ENCODE measurements at regions of chr1 and their contacts with region 1.

Region 1: DNA sequence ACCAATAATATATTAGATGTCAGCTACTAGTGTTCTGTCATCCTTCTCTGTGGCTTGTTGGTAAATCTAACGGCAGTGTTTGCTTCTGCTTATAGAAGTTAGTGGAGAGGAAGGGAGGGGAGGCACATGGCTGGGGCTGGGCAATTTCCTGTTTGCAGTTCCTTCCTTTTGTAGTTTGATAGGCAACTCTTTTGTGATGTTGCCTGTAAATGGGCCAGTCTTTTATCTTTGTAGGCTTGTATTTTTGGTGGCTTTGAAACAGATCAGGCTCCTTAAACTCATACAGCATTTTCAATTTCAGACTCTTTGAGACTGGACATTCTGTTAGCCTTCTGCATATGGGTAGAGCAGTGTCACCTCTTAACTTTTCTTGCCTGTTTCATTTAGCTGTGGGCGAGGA is 48.1 kb downstream of the CDC14A start:
- DNase-seq: peak; percentile 67
- ATAC-seq: peak; percentile 51
- H3K4me3 Mint-ChIP-seq: peak overlapping the region; percentile 60
- H3K27ac Mint-ChIP-seq: peak overlapping the region; percentile 92
- H3K4me1 Mint-ChIP-seq: peaks cover 84% of the 10 kb centered on the region
- H3K27me3 Mint-ChIP-seq: no peaks in the 10 kb centered on the region

Region 2: GRCh38 chr1:100377590-100378361 is 22.6 kb before region 1 on chr1:
- CTCF ChIA-PET with region 1: interaction called, 5 read pairs
- POLR2A ChIA-PET with region 1: no interaction called
- intact Hi-C with region 1: loop called in 1 of 2 experiments (anchors 1 kb)
- DNase-seq: no peak
- ATAC-seq: peak; percentile 89
- H3K4me3 Mint-ChIP-seq: no peak overlapping the region
- H3K27ac Mint-ChIP-seq: peak overlapping the region; percentile 84
- H3K4me1 Mint-ChIP-seq: peaks cover 62% of the 10 kb centered on the region
- H3K27me3 Mint-ChIP-seq: peaks cover 3% of the 10 kb centered on the region

Region 3: GRCh38 chr1:100414693-100415497 is 14.5 kb after region 1 on chr1:
- CTCF ChIA-PET with region 1: interaction called, 12 read pairs
- POLR2A ChIA-PET with region 1: interaction called, 3 read pairs
- intact Hi-C with region 1: no loop called
- DNase-seq: no peak
- ATAC-seq: peak; percentile 77
- H3K4me3 Mint-ChIP-seq: peak overlapping the region; percentile 33
- H3K27ac Mint-ChIP-seq: peak overlapping the region; percentile 85
- H3K4me1 Mint-ChIP-seq: peaks cover 72% of the 10 kb centered on the region
- H3K27me3 Mint-ChIP-seq: no peaks in the 10 kb centered on the region

Region 4: DNA sequence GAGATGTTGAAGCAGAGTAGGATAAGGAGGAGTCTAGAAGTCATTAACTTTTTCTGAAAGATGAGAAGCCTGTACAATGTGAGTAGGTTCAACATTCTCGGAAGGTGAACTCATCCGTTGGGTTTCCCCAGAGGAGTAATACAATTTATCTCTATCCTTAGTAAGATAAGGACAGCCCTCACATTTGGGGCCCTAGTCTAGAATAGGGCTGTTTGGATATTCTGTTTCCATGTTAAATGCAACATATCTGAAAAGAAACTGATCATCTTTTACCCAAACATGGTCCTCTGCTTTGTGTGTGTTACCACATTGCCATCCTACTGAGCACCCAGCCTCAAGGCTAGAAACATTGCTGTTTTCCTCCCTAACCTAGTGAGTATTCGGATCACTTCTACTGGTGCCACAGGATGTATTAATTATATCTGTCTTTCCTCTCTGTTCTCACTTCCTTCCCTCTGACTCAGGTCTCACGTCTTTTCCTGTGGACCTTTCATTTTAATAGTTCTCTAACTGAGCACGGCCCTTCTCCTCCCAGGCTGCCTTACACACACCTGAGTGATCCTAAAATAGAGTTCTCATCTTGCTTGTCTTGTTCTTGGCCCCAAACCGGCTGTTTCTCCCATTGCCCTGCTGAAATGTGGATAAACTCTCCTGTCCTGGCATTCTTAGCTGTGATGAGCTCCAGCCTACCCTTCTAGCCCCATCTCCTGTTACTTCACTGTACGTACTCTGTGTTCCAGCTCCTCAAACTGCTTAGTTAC is 43.6 kb after region 1 on chr1:
- CTCF ChIA-PET with region 1: interaction called, 3 read pairs
- POLR2A ChIA-PET with region 1: interaction called, 4 read pairs
- intact Hi-C with region 1: loop called in 1 of 2 experiments (anchors 2 kb)
- DNase-seq: peak; percentile 49
- ATAC-seq: peak; percentile 79
- H3K4me3 Mint-ChIP-seq: peak overlapping the region; percentile 68
- H3K27ac Mint-ChIP-seq: peak overlapping the region; percentile 93
- H3K4me1 Mint-ChIP-seq: peaks cover 84% of the 10 kb centered on the region
- H3K27me3 Mint-ChIP-seq: no peaks in the 10 kb centered on the region

Measured in activated CD4-positive, alpha-beta T cell treated with anti-CD3 and anti-CD28 coated beads for 36 hours (primary cell).